ENCODE measurements at regions of chr1 and their contacts with region 1.

Region 1: GRCh38 chr1:11838349-11839272 is 9.0 kb downstream of the NPPA start:
- H3K4me3 ChIP-seq: no peak overlapping the region
- H3K27ac ChIP-seq: no peak overlapping the region
- H3K4me1 ChIP-seq: no peaks in the 10 kb centered on the region
- CTCF ChIP-seq: peak; percentile 95

Region 2: GRCh38 chr1:11893907-11894251 is 55.3 kb after region 1 on chr1:
- CTCF ChIA-PET with region 1: interaction called, 114 read pairs
- POLR2A ChIA-PET with region 1: no interaction called
- H3K4me3 ChIP-seq: no peak overlapping the region
- H3K27ac ChIP-seq: no peak overlapping the region
- H3K4me1 ChIP-seq: no peaks in the 10 kb centered on the region
- CTCF ChIP-seq: peak; percentile 64

Region 3: DNA sequence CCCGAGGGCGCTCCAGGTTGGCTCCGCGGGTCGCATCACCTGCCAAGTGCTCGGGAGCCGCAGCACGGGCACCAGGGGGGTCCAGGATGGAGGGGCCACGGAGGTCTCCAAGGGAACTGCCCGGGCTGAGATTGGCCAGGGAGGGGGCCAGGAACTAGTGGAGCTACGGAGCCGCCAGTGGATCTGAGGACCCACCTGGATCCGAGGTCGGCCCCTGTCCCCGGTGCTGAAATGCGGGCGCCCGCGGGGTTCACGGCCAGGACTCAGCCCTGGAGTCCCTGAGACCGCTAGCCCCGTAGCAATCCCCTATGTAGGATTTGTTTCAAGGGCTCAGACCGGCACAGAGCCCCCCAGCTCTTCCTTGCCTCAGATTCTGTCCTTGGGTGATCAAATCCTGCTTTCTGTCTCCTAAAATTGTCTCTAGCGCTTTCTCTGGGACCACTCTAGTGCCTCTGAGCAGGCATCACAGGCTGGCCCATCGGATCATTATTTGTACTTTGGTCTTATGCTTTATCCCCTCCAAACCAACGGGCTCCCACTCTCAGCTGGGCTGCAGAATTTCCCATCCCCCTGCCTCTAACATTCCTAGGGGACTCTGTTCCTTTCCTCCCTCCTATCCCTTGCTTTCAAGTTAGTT is 60.3 kb after region 1 on chr1:
- CTCF ChIA-PET with region 1: interaction called, 114 read pairs
- POLR2A ChIA-PET with region 1: no interaction called
- H3K4me3 ChIP-seq: no peak overlapping the region
- H3K27ac ChIP-seq: no peak overlapping the region
- H3K4me1 ChIP-seq: no peaks in the 10 kb centered on the region
- CTCF ChIP-seq: no peak

Region 4: GRCh38 chr1:11967028-11967547 is 128.5 kb after region 1 on chr1:
- CTCF ChIA-PET with region 1: interaction called, 14 read pairs
- POLR2A ChIA-PET with region 1: no interaction called
- H3K4me3 ChIP-seq: no peak overlapping the region
- H3K27ac ChIP-seq: no peak overlapping the region
- H3K4me1 ChIP-seq: no peaks in the 10 kb centered on the region
- CTCF ChIP-seq: peak; percentile 96

Measured in HEK293 (cell line).